MCF 10A (cell line): ENCODE measurements at regions of chr7 and their contacts with region 1.

Region 1: GRCh38 chr7:140653319-140654108 is 12.9 kb upstream of the DENND2A start:
- DNase-seq: peak; percentile 84
- H3K4me3 Mint-ChIP-seq: no peak overlapping the region
- H3K27ac Mint-ChIP-seq: no peak overlapping the region
- H3K4me1 Mint-ChIP-seq: peaks cover 42% of the 10 kb centered on the region
- H3K27me3 Mint-ChIP-seq: no peaks in the 10 kb centered on the region
- CTCF ChIP-seq: peak; percentile 88

Region 2: DNA sequence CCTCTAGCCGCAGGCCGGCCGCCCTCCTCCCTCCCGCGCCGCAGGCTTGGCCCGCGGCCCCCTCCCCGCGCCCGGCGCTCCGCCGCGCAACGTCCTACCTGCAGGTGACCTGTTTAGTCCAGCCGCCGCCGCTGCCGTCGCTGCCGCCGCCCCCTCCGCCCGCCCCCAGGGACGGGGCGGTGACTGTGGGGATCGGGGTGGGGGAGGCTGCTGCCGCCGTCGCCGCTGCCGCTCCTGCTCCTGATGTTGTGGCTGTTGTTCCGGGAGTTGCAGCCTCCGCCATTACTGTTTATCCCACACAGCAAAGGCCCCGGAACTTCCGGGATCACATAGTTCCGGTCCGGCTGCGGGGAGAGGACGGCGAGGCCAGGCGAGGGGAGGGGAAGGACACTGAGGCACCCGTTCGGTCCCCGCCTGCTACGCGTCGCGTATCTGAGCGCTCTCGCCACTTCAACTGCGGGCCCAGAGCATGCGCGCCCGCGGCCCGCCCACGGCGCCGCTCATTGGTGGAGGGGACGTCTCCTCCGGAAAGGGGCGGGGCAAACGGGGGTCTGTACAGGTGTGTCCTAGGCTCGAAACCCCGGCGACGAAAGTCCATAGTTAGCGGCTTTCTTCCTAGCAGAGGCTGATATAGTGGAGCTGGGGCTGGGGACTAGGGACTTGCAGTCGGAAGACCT is 174.3 kb before region 1 on chr7 and contains the start of gene MKRN1:
- CTCF ChIA-PET with region 1: interaction called, 12 read pairs
- POLR2A ChIA-PET with region 1: interaction called, 4 read pairs
- intact Hi-C with region 1: loop called (anchors 1 kb)
- DNase-seq: peak; percentile 94
- H3K4me3 Mint-ChIP-seq: peak within 1 kb of the TSS; percentile 85
- H3K27ac Mint-ChIP-seq: peak within 1 kb of the TSS; percentile 90
- H3K4me1 Mint-ChIP-seq: peaks cover 5% of the 10 kb centered on the region
- H3K27me3 Mint-ChIP-seq: no peaks in the 10 kb centered on the region
- CTCF ChIP-seq: no peak
- total RNA-seq, gene MKRN1: 59.8 and 65.5 TPM in 2 replicates

Region 3: GRCh38 chr7:140494867-140495266 is 158.6 kb before region 1 on chr7:
- CTCF ChIA-PET with region 1: interaction called, 11 read pairs
- POLR2A ChIA-PET with region 1: no interaction called
- intact Hi-C with region 1: no loop called
- DNase-seq: no peak
- H3K4me3 Mint-ChIP-seq: no peak overlapping the region
- H3K27ac Mint-ChIP-seq: no peak overlapping the region
- H3K4me1 Mint-ChIP-seq: no peaks in the 10 kb centered on the region
- H3K27me3 Mint-ChIP-seq: no peaks in the 10 kb centered on the region
- CTCF ChIP-seq: no peak

Region 4: DNA sequence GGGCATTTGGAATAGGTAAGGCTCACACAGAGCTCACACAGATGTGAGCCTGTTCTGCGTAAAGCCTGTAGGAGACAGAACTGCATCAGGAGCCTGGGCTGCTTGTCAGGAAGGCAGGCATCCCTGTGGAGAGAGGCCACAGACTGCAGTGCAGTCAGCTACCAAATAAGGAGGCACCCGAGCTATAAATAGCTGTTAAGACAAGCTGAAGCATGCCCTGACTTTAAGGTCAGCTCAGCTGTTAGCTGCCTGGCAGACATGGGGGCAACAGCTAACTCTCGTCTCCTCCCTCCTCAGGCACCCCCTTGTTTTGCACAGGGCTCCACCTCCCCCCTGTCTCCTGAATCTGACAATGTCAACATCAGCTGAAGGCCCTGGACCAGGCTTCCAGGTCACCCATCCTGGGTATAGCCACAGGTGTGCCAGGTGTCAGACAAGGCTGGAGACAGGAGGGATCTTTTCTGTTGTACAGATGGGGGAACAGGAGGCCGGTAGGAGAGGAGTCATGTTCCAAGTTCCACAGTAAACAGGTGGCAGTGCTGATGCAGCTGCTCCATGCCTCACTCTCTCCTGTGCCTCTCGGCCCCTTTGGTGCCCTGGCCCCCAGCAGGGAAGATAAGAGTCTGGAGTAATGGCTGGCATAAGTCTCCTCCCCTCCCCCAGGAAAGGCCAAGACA is 146.6 kb before region 1 on chr7:
- CTCF ChIA-PET with region 1: interaction called, 10 read pairs
- POLR2A ChIA-PET with region 1: no interaction called
- intact Hi-C with region 1: no loop called
- DNase-seq: peak; percentile 30
- H3K4me3 Mint-ChIP-seq: no peak overlapping the region
- H3K27ac Mint-ChIP-seq: no peak overlapping the region
- H3K4me1 Mint-ChIP-seq: peaks cover 6% of the 10 kb centered on the region
- H3K27me3 Mint-ChIP-seq: no peaks in the 10 kb centered on the region
- CTCF ChIP-seq: no peak

Region 5: DNA sequence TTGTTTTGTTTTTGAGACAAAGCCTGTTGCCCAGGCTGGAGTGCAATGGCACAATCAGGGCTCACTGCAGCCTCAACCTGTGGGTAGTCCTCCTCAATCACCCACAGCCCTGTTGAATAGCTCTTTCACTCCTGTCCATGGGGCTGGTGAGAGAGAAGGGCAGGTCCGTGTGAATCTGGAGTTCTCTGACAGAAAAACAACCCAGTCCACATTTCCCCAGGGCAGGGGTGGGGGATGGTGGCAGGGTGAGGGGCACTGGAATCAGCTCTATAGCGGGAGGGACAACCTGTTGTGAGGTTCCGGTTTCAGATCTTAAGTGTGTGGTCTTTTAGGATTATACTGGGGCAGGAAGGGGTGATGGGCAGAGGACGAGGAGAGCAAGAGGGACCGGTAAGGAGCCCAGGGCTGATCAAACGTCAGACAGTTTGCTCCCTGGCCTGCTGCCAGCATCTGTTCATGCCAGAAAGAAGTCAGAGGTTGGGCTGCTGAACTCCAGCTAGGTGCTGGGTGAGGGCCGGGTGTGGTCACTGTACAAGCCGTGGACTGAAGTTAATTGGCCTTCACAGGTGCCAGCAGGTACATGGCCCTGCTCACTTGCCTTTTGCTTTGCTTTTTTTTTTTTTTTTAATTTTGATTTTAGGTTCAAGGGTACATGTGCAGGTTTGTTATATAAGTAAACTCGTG is 141.1 kb before region 1 on chr7:
- CTCF ChIA-PET with region 1: interaction called, 118 read pairs
- POLR2A ChIA-PET with region 1: interaction called, 14 read pairs
- intact Hi-C with region 1: no loop called
- DNase-seq: peak; percentile 82
- H3K4me3 Mint-ChIP-seq: no peak overlapping the region
- H3K27ac Mint-ChIP-seq: no peak overlapping the region
- H3K4me1 Mint-ChIP-seq: peaks cover 6% of the 10 kb centered on the region
- H3K27me3 Mint-ChIP-seq: no peaks in the 10 kb centered on the region
- CTCF ChIP-seq: no peak

Region 6: GRCh38 chr7:140517546-140518369 is 135.8 kb before region 1 on chr7:
- CTCF ChIA-PET with region 1: interaction called, 118 read pairs
- POLR2A ChIA-PET with region 1: interaction called, 14 read pairs
- intact Hi-C with region 1: loop called (anchors 1 kb)
- DNase-seq: peak; percentile 91
- H3K4me3 Mint-ChIP-seq: no peak overlapping the region
- H3K27ac Mint-ChIP-seq: no peak overlapping the region
- H3K4me1 Mint-ChIP-seq: peaks cover 6% of the 10 kb centered on the region
- H3K27me3 Mint-ChIP-seq: no peaks in the 10 kb centered on the region
- CTCF ChIP-seq: peak; percentile 81

Region 7: GRCh38 chr7:140525743-140526142 is 127.8 kb before region 1 on chr7:
- CTCF ChIA-PET with region 1: interaction called, 61 read pairs
- POLR2A ChIA-PET with region 1: no interaction called
- intact Hi-C with region 1: no loop called
- DNase-seq: peak; percentile 84
- H3K4me3 Mint-ChIP-seq: no peak overlapping the region
- H3K27ac Mint-ChIP-seq: no peak overlapping the region
- H3K4me1 Mint-ChIP-seq: peaks cover 8% of the 10 kb centered on the region
- H3K27me3 Mint-ChIP-seq: peaks cover 1% of the 10 kb centered on the region
- CTCF ChIP-seq: no peak

Region 8: DNA sequence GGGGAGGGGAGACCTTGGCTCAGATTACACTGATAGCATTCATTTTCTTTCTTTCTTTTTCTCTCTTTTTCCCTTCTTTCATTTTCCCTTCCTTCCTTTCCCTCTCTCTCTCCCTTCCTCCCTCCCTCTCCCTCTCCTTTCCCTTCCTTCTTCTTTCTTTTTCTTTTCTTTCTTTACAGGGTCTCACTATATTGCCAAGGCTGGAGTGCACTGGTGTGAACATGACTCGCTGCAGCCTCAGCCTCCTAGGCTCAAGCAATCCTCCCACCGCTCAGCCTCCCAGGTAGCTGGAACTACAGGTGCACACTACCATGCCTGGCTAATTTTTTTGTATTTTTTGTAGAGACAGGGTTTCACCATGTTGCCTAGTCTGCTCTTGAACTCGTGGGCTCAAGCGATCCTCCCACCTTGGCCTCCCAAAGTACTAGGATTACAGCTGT is 101.3 kb before region 1 on chr7:
- CTCF ChIA-PET with region 1: no interaction called
- POLR2A ChIA-PET with region 1: no interaction called
- intact Hi-C with region 1: no loop called
- DNase-seq: no peak
- H3K4me3 Mint-ChIP-seq: no peak overlapping the region
- H3K27ac Mint-ChIP-seq: no peak overlapping the region
- H3K4me1 Mint-ChIP-seq: no peaks in the 10 kb centered on the region
- H3K27me3 Mint-ChIP-seq: no peaks in the 10 kb centered on the region
- CTCF ChIP-seq: no peak

Region 9: GRCh38 chr7:140889645-140890044 is 236.1 kb after region 1 on chr7:
- CTCF ChIA-PET with region 1: no interaction called
- POLR2A ChIA-PET with region 1: no interaction called
- intact Hi-C with region 1: no loop called
- DNase-seq: no peak
- H3K4me3 Mint-ChIP-seq: no peak overlapping the region
- H3K27ac Mint-ChIP-seq: no peak overlapping the region
- H3K4me1 Mint-ChIP-seq: peaks cover 4% of the 10 kb centered on the region
- H3K27me3 Mint-ChIP-seq: no peaks in the 10 kb centered on the region
- CTCF ChIP-seq: no peak